ENCODE measurements at regions of chr10 and their contacts with region 1.

Region 1: GRCh38 chr10:101141616-101142532 is 10.8 kb downstream of the TLX1 start:
- DNase-seq: peak; percentile 57 to 85 (median 77)
- ATAC-seq: peak; percentile 93
- H3K4me3 ChIP-seq: no peak overlapping the region
- H3K4me3 Mint-ChIP-seq: peak overlapping the region in 5 of 10 donors; percentile 9 to 53 (median 18)
- H3K27ac ChIP-seq: no peak overlapping the region
- H3K27ac Mint-ChIP-seq: no peak overlapping the region
- H3K4me1 ChIP-seq: peaks cover 0 to 19% of the 10 kb centered on the region in 2 donors
- H3K4me1 Mint-ChIP-seq: peaks cover 10 to 38% (median 26%) of the 10 kb centered on the region in 7 donors
- H3K27me3 ChIP-seq: peaks cover 9 to 43% of the 10 kb centered on the region in 2 donors
- H3K27me3 Mint-ChIP-seq: peaks cover 74 to 97% (median 83%) of the 10 kb centered on the region in 5 donors

Region 2: GRCh38 chr10:100743626-100744135 is 398.2 kb before region 1 on chr10:
- CTCF ChIA-PET with region 1: no interaction called
- POLR2A ChIA-PET with region 1: no interaction called
- intact Hi-C with region 1: loop called in 1 of 2 experiments (anchors 5 kb)
- DNase-seq: peak in 6 of 9 donors; percentile 41 to 48 (median 44)
- ATAC-seq: peak; percentile 72
- H3K4me3 ChIP-seq: no peak overlapping the region
- H3K4me3 Mint-ChIP-seq: peak overlapping the region; percentile 23 to 72 (median 58)
- H3K27ac ChIP-seq: no peak overlapping the region
- H3K27ac Mint-ChIP-seq: peak overlapping the region in 1 of 9 donors; percentile 61
- H3K4me1 ChIP-seq: peaks cover 4 to 17% of the 10 kb centered on the region in 2 donors
- H3K4me1 Mint-ChIP-seq: peaks cover 27 to 56% (median 36%) of the 10 kb centered on the region in 7 donors
- H3K27me3 ChIP-seq: peaks cover 10 to 27% of the 10 kb centered on the region in 2 donors
- H3K27me3 Mint-ChIP-seq: peaks cover 60 to 88% (median 66%) of the 10 kb centered on the region in 5 donors

Region 3: DNA sequence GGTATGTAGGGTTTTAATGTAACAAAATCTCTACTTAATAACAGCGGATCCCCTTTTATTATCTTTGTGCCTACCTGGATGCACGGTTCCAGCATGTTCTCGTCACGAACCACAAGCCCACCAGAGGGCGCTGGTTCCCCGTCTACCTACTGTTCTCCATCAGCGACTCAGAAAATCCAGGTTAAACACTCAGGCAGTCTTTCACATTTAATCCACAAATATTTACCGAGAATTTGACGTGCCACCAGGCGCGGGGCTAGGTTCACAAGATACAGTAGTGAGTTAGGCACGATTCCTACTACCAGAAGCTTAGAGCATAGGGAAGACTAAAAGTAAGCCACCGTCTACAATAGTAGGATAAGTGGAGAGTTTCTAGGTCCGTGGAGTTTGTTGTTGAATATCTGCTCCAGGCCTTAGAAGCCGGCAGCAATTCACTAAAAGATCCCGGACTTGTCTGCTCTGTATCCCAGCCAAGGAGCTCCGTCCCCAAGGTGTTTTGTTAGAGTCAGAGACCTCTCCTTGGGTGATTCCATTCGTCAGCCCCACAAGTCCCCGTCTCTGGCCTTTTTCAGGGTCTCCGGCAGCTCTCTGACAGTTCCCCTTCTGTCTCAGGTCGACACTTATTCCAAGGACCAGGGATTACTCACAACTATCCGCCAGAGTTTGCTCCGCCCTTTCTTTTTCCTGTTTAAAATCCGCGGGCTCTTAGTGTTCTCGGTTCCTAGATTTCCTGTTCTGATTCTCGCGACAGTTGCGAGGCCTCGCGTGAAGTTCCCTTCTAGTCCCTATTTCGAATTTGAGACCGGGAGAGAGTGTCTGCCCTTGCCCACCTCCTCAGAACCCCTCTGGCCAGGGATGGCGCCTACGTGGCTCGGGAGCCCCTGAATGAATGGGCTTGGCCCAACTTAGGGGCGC is 81.6 kb before region 1 on chr10:
- CTCF ChIA-PET with region 1: interaction called, 16 read pairs
- POLR2A ChIA-PET with region 1: no interaction called
- intact Hi-C with region 1: loop called in 1 of 2 experiments (anchors 1 kb)
- DNase-seq: peak; percentile 70 to 97 (median 94)
- ATAC-seq: peak; percentile 82
- H3K4me3 ChIP-seq: peak overlapping the region; percentile 96
- H3K4me3 Mint-ChIP-seq: peak overlapping the region; percentile 90 to 99 (median 96)
- H3K27ac ChIP-seq: peak overlapping the region; percentile 96
- H3K27ac Mint-ChIP-seq: peak overlapping the region; percentile 86 to 98 (median 93)
- H3K4me1 ChIP-seq: peaks cover 12 to 21% of the 10 kb centered on the region in 2 donors
- H3K4me1 Mint-ChIP-seq: peaks cover 16 to 61% (median 31%) of the 10 kb centered on the region in 7 donors
- H3K27me3 ChIP-seq: peaks cover 5 to 18% of the 10 kb centered on the region in 2 donors
- H3K27me3 Mint-ChIP-seq: peaks cover 15 to 23% (median 18%) of the 10 kb centered on the region in 5 donors

Region 4: GRCh38 chr10:101095542-101096213 is 46.2 kb before region 1 on chr10:
- CTCF ChIA-PET with region 1: interaction called, 204 read pairs
- POLR2A ChIA-PET with region 1: interaction called, 6 read pairs
- intact Hi-C with region 1: loop called (anchors 1 kb)
- DNase-seq: peak; percentile 45 to 71 (median 59)
- ATAC-seq: peak; percentile 88
- H3K4me3 ChIP-seq: no peak overlapping the region
- H3K4me3 Mint-ChIP-seq: no peak overlapping the region
- H3K27ac ChIP-seq: no peak overlapping the region
- H3K27ac Mint-ChIP-seq: peak overlapping the region in 1 of 9 donors; percentile 34
- H3K4me1 ChIP-seq: peaks cover 3 to 4% of the 10 kb centered on the region in 2 donors
- H3K4me1 Mint-ChIP-seq: peaks cover 0 to 4% (median 0%) of the 10 kb centered on the region in 7 donors
- H3K27me3 ChIP-seq: peaks cover 0 to 5% of the 10 kb centered on the region in 2 donors
- H3K27me3 Mint-ChIP-seq: peaks cover 27 to 59% (median 51%) of the 10 kb centered on the region in 5 donors

Region 5: GRCh38 chr10:101120884-101121653 is 20.8 kb before region 1 on chr10:
- CTCF ChIA-PET with region 1: interaction called, 15 read pairs
- POLR2A ChIA-PET with region 1: interaction called, 4 read pairs
- intact Hi-C with region 1: loop called in 1 of 2 experiments (anchors 1 kb)
- DNase-seq: peak in 8 of 9 donors; percentile 35 to 58 (median 47)
- ATAC-seq: peak; percentile 84
- H3K4me3 ChIP-seq: peak overlapping the region; percentile 87
- H3K4me3 Mint-ChIP-seq: peak overlapping the region; percentile 88 to 100 (median 96)
- H3K27ac ChIP-seq: peak overlapping the region; percentile 55
- H3K27ac Mint-ChIP-seq: peak overlapping the region; percentile 83 to 97 (median 90)
- H3K4me1 ChIP-seq: peaks cover 6 to 21% of the 10 kb centered on the region in 2 donors
- H3K4me1 Mint-ChIP-seq: peaks cover 21 to 32% (median 30%) of the 10 kb centered on the region in 7 donors
- H3K27me3 ChIP-seq: no peaks in the 10 kb centered on the region
- H3K27me3 Mint-ChIP-seq: peaks cover 41 to 86% (median 47%) of the 10 kb centered on the region in 5 donors

Measured in naive thymus-derived CD4-positive, alpha-beta T cell (primary cell).